T-cell (primary cell): ENCODE measurements at regions of chr2 and their contacts with region 1.

Region 1: DNA sequence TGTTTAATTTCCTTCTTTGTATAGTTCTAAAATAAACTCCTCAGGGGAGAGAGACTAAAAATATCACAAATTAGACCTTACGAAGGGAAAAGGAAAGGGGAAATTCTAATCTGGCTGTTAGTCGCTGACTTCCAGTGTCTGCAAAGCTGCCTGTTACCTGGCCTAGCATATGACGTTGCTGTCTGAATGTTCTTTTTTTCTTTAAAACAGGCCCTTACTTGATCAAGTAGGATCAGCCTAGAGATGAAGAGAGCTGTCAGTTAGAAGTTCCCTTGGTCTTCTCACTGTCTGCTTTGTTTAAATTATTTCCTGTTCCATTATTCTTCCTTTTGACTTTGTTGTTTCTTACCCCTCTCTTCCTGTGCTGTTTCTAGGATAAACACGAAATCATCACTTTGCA is 11.2 kb downstream of the NCK2 start:
- DNase-seq: peak in 10 of 35 experiments; percentile 22 to 79 (median 46)
- ATAC-seq: peak; percentile 39 to 86 (median 43)
- H3K4me3 ChIP-seq: peak overlapping the region in 1 of 2 donors; percentile 11
- H3K4me3 Mint-ChIP-seq: peak overlapping the region; percentile 46 to 98 (median 46)
- H3K27ac ChIP-seq: peak overlapping the region; percentile 88
- H3K27ac Mint-ChIP-seq: peak overlapping the region; percentile 91 to 95
- H3K4me1 ChIP-seq: peaks cover 70 to 83% of the 10 kb centered on the region in 2 experiments
- H3K4me1 Mint-ChIP-seq: peaks cover 96 to 99% (median 98%) of the 10 kb centered on the region in 3 donors
- H3K27me3 ChIP-seq: no peaks in the 10 kb centered on the region
- H3K27me3 Mint-ChIP-seq: no peaks in the 10 kb centered on the region

Region 2: GRCh38 chr2:105744091-105744908 is 11.6 kb before region 1 on chr2:
- CTCF ChIA-PET with region 1: interaction called in 1 of 2 experiments, 4 read pairs
- POLR2A ChIA-PET with region 1: interaction called, 9 to 11 read pairs
- DNase-seq: peak in 34 of 35 experiments; percentile 44 to 85 (median 65)
- ATAC-seq: peak; percentile 80 to 86 (median 82)
- H3K4me3 ChIP-seq: peak overlapping the region in 1 of 2 donors; percentile 53
- H3K4me3 Mint-ChIP-seq: peak overlapping the region; percentile 78 to 89 (median 88)
- H3K27ac ChIP-seq: peak overlapping the region; percentile 66
- H3K27ac Mint-ChIP-seq: peak overlapping the region; percentile 95 to 100
- H3K4me1 ChIP-seq: peaks cover 47 to 72% of the 10 kb centered on the region in 2 experiments
- H3K4me1 Mint-ChIP-seq: peaks cover 78 to 87% (median 79%) of the 10 kb centered on the region in 3 donors
- H3K27me3 ChIP-seq: no peaks in the 10 kb centered on the region
- H3K27me3 Mint-ChIP-seq: no peaks in the 10 kb centered on the region